K562 (cell line): ENCODE measurements at regions of chr10 and their contacts with region 1.

Region 1: DNA sequence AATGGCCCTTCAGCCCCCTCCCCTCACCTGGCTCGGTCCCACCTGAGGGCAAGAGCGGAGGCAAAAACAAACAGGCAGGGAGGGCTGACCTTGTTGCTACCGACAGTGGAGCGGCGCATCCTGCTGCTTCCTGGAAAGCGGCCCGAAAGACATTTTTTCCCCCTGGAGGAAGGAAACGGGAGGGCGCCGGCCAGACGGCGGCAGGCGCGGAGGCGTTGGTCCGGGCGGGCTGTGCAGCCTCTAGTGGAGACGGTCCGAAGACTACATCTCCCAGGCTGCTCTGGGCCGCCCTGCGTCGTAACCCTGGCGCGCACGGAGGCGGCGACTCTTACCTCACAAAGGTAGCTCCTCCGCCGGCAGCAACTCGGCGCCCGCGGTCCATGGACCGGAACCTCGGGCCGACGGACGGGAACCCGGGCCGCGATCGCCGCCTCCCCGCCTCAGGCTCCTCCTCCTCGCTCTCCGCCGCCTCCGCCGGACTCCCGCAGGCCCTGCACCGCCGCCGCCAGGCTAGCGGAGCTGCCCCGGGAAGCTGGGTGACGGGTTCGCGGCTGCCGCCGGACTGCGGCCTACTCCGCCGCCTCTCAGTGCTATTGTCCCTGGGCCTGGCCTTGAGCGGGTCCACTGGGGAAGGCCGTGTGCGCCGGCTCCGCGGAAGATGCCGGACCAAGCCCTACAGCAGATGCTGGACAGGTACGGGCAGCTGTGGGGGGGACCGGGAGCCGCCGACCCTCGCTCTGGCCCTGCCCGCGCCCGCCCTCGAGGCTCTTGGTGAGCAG is at the starts of genes CPEB3 and MARCHF5:
- DNase-seq: peak; percentile 79 to 94 (median 85)
- ATAC-seq: peak; percentile 97
- H3K4me3 ChIP-seq: peak within 1 kb of the TSS; percentile 97
- H3K27ac ChIP-seq: peak within 1 kb of the TSS; percentile 89
- H3K4me1 ChIP-seq: peaks cover 5 to 9% of the 10 kb centered on the region in 2 experiments; a peak in 4 of 5 replicates
- H3K27me3 ChIP-seq: no peaks in the 10 kb centered on the region
- CTCF ChIP-seq: peak; percentile 53 to 76 (median 61); a peak in 5 of 6 replicates
- EP300 ChIP-seq: no peak
- POLR2A ChIP-seq: peak; percentile 72
- RAD21 ChIP-seq: peak; percentile 39 to 47; a peak in 3 of 4 replicates
- polyA plus RNA-seq, gene CPEB3: 0.15 to 0.17 TPM
- polyA plus RNA-seq, gene MARCHF5: 3.4 to 4.0 TPM

Region 2: GRCh38 chr10:92208736-92209327 is 82.2 kb before region 1 on chr10:
- CTCF ChIA-PET with region 1: no interaction called
- POLR2A ChIA-PET with region 1: no interaction called
- in situ Hi-C with region 1: no loop called
- intact Hi-C with region 1: loop called (anchors 5 kb)
- DNase-seq: no peak
- ATAC-seq: no peak
- H3K4me3 ChIP-seq: no peak overlapping the region
- H3K27ac ChIP-seq: no peak overlapping the region
- H3K4me1 ChIP-seq: no peaks in the 10 kb centered on the region; a peak in 1 of 5 replicates
- H3K27me3 ChIP-seq: no peaks in the 10 kb centered on the region
- CTCF ChIP-seq: no peak
- EP300 ChIP-seq: no peak
- POLR2A ChIP-seq: no peak
- RAD21 ChIP-seq: no peak

Region 3: DNA sequence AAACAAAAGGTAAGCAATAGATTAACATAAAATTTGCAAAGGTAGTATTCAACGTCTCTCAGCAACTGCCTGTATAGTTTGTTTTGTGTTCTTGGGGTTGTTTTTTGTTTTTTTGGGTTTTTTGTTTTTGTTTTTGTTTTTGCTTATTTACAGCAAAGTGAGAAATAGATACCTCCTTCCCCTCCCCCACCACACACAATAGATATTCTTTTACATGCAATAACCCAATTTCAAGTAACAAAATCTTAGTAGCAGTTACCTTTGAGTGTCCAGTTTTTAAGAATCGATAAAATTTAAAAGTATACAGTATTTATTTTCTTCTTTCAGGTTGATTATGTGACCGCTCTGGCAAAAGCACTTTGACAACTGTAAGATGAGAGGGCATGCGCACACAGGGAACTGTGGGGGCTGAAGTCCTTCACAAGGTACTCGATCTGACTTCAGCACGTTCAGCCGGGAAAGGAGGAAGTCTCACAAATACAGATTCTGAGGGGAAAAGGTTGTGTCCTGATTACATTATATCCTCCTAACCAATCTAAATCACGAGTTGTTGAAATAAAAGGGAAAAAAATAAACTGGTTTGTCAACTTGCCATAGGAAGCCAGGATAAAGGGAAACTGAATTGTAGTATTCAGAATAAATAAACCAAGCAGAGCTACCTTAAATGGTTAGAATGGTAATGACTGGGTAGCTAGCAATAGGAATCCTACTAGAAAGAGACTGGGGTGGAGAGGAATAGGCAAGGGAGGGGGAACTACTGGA is 47.9 kb before region 1 on chr10:
- CTCF ChIA-PET with region 1: no interaction called
- POLR2A ChIA-PET with region 1: interaction called, 3 read pairs
- in situ Hi-C with region 1: no loop called
- intact Hi-C with region 1: loop called (anchors 2 kb)
- DNase-seq: peak; percentile 12 to 68 (median 34)
- ATAC-seq: peak; percentile 85
- H3K4me3 ChIP-seq: no peak overlapping the region
- H3K27ac ChIP-seq: no peak overlapping the region
- H3K4me1 ChIP-seq: peaks cover 7 to 13% of the 10 kb centered on the region in 2 experiments
- H3K27me3 ChIP-seq: no peaks in the 10 kb centered on the region
- CTCF ChIP-seq: no peak
- EP300 ChIP-seq: no peak
- POLR2A ChIP-seq: no peak
- RAD21 ChIP-seq: no peak